ENCODE measurements at regions of chr3 and their contacts with region 1.

Region 1: GRCh38 chr3:130779031-130779430 is 32.4 kb upstream of the PIK3R4 start:
- DNase-seq: peak; percentile 62
- CTCF ChIP-seq: no peak

Region 2: DNA sequence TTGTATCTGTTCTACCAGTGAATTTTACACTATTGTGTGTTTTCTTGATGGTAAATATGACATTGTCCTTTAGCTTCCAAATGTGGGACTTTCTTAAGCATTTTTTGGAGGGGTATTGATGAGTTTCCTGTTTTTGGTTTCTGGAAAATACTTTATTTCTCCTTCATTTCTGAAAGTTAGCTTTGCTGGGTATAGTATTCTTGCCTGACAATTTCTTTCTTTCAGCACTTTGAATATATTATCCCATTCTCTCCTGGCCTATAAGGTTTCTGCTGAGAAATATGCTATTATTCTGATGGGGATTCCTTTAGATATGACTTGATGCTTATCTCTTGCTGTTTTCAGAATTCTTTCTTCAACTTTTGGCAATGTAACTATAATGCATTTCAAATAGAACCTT is 99.4 kb after region 1 on chr3:
- in situ Hi-C with region 1: loop called (anchors 5 kb)
- DNase-seq: no peak
- CTCF ChIP-seq: no peak

Measured in GM13977 (cell line).